ENCODE measurements at regions of chr13 and their contacts with region 1.

Region 1: GRCh38 chr13:79525064-79525857 is 44.3 kb downstream of the NDFIP2 start:
- DNase-seq: peak; percentile 69
- ATAC-seq: peak; percentile 87
- H3K4me3 ChIP-seq: no peak overlapping the region
- H3K27ac ChIP-seq: peak overlapping the region; percentile 37
- H3K4me1 ChIP-seq: peaks cover 20% of the 10 kb centered on the region
- H3K27me3 ChIP-seq: no peaks in the 10 kb centered on the region
- CTCF ChIP-seq: no peak

Region 2: GRCh38 chr13:79273045-79273444 is 252.2 kb before region 1 on chr13:
- CTCF ChIA-PET with region 1: no interaction called
- POLR2A ChIA-PET with region 1: no interaction called
- intact Hi-C with region 1: no loop called
- DNase-seq: no peak
- ATAC-seq: no peak
- H3K4me3 ChIP-seq: no peak overlapping the region
- H3K27ac ChIP-seq: no peak overlapping the region
- H3K4me1 ChIP-seq: peaks cover 11% of the 10 kb centered on the region
- H3K27me3 ChIP-seq: no peaks in the 10 kb centered on the region
- CTCF ChIP-seq: no peak

Region 3: GRCh38 chr13:79491715-79492114 is 33.5 kb before region 1 on chr13:
- CTCF ChIA-PET with region 1: no interaction called
- POLR2A ChIA-PET with region 1: interaction called, 6 read pairs
- intact Hi-C with region 1: loop called (anchors 2 kb)
- DNase-seq: peak; percentile 62
- ATAC-seq: peak; percentile 89
- H3K4me3 ChIP-seq: no peak overlapping the region; the same call in 1 of the 2 replicates
- H3K27ac ChIP-seq: peak overlapping the region; percentile 40
- H3K4me1 ChIP-seq: peaks cover 23% of the 10 kb centered on the region
- H3K27me3 ChIP-seq: no peaks in the 10 kb centered on the region
- CTCF ChIP-seq: no peak